Endothelial cell of umbilical vein (primary cell): ENCODE measurements at regions of chr14 and their contacts with region 1.

Region 1: GRCh38 chr14:66650491-66650911 is 142.6 kb downstream of the GPHN start:
- DNase-seq: peak; percentile 78
- H3K4me3 ChIP-seq: no peak overlapping the region
- H3K27ac ChIP-seq: peak overlapping the region; percentile 63
- H3K4me1 ChIP-seq: peaks cover 22% of the 10 kb centered on the region
- H3K27me3 ChIP-seq: no peaks in the 10 kb centered on the region
- CTCF ChIP-seq: no peak
- POLR2A ChIP-seq: no peak

Region 2: GRCh38 chr14:66483322-66483721 is 167.2 kb before region 1 on chr14:
- CTCF ChIA-PET with region 1: no interaction called
- POLR2A ChIA-PET with region 1: no interaction called
- dilution Hi-C with region 1: no loop called
- intact Hi-C with region 1: no loop called
- DNase-seq: no peak
- H3K4me3 ChIP-seq: no peak overlapping the region
- H3K27ac ChIP-seq: no peak overlapping the region
- H3K4me1 ChIP-seq: no peaks in the 10 kb centered on the region
- H3K27me3 ChIP-seq: no peaks in the 10 kb centered on the region
- CTCF ChIP-seq: no peak
- POLR2A ChIP-seq: no peak

Region 3: GRCh38 chr14:66507722-66508546 is 142.6 kb before region 1 on chr14 and contains the start of gene GPHN:
- CTCF ChIA-PET with region 1: no interaction called
- POLR2A ChIA-PET with region 1: no interaction called
- dilution Hi-C with region 1: no loop called
- intact Hi-C with region 1: loop called (anchors 5 kb)
- DNase-seq: peak; percentile 99
- H3K4me3 ChIP-seq: peak within 1 kb of the TSS; percentile 85 to 97 (median 93)
- H3K27ac ChIP-seq: peak within 1 kb of the TSS; percentile 27
- H3K4me1 ChIP-seq: peaks cover 14% of the 10 kb centered on the region
- H3K27me3 ChIP-seq: peaks cover 0 to 2% of the 10 kb centered on the region in 2 experiments
- CTCF ChIP-seq: peak in 1 of 2 donors; percentile 5
- POLR2A ChIP-seq: peak; percentile 95
- total RNA-seq, gene GPHN: 18.7 and 23.2 TPM in 2 replicates